ENCODE measurements at regions of chr10 and their contacts with region 1.

Region 1: DNA sequence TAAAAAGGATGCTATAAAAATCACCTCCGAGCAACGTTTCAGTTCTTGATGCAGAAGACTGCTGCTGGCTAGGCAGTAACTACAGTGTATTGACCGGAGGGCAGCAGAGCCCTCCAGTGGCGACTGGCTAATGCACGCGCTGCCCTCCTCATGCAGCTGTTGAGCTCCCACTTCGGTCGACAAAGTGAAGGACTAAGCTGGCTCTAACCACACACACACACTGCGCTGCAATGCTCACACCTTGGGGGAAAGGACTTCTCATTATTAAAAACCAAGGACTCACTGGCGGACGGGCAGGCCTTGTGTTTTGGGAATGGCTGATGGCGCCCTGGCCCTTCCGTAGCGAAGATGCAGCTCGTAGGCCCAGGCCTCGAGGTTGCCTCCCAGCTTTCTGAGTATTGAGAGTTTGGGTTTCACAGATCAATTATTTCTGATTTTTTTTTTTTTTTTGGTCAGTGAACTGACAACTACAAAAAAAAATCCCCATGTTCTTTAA is 120.9 kb upstream of the DIP2C start:
- DNase-seq: no peak
- ATAC-seq: peak; percentile 59
- H3K4me3 ChIP-seq: no peak overlapping the region
- H3K27ac ChIP-seq: no peak overlapping the region
- H3K4me1 ChIP-seq: no peaks in the 10 kb centered on the region
- H3K27me3 ChIP-seq: no peaks in the 10 kb centered on the region

Region 2: GRCh38 chr10:511101-511848 is 299.1 kb before region 1 on chr10:
- intact Hi-C with region 1: loop called (anchors 10 kb)
- DNase-seq: peak; percentile 95 to 99
- ATAC-seq: peak; percentile 93
- H3K4me3 ChIP-seq: no peak overlapping the region
- H3K27ac ChIP-seq: no peak overlapping the region
- H3K4me1 ChIP-seq: no peaks in the 10 kb centered on the region
- H3K27me3 ChIP-seq: no peaks in the 10 kb centered on the region